Activated CD8-positive, alpha-beta T cell treated with anti-CD3 and anti-CD28 coated beads, Interleukin-2, amount 10 ng/mL, durations not matched to agents 7 days and 5 days (primary cell): ENCODE measurements at regions of chr15 and their contacts with region 1.

Region 1: DNA sequence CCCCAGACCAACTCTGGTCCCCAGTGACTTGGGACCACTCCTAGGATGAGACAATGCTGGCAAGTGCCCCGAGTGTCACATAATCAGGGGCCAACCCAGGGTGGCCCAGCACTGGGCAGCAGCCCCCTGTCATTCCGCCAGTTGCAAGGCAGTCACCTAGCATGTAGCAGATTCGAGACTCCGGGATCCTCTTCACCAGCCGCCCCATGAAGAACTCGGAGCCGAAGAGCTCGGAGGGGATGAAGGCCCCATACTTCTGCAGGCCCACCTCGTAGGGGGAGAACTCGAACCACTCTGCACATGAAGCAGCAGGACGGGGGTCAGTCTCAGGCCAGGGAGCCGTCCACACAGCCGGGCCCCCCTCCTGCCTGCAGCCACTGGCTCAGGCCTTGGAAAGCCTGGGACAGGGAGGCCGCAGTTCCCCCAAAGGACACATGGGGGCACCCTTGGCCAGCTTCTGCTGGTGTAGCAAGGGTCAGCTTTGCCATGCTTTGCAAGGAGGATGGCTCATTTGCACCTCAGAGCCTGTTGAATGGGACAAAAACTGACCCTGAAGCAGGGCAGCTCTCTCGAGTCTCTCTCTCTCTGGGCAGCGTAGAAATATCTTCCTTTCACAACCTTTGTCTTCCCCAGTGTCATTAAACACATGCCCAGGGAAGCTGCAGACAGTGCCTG is 17.0 kb upstream of the EHD4 start:
- DNase-seq: peak; percentile 88
- ATAC-seq: peak; percentile 88
- H3K4me3 Mint-ChIP-seq: no peak overlapping the region
- H3K27ac Mint-ChIP-seq: no peak overlapping the region
- H3K4me1 Mint-ChIP-seq: no peaks in the 10 kb centered on the region
- H3K27me3 Mint-ChIP-seq: no peaks in the 10 kb centered on the region

Region 2: DNA sequence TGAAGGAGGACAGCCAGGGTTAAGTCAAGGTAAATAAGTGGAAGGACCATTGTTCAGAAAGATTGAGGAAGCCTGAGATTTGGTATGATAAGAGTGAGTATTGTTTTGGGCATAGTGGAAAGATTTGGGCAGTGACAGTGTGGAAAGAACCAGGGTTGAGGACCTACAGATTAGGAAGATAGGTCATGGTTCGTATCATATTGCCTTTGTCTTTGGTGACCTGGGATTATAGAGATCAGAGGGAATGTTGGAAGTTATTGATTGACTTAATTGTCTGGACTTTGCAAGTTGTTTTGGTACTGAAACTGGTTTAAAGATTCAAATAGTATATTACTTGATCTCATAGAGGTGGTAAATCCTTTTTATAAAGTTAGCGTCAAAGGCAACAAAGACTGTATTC is 352.3 kb before region 1 on chr15:
- CTCF ChIA-PET with region 1: no interaction called
- POLR2A ChIA-PET with region 1: no interaction called
- DNase-seq: no peak
- ATAC-seq: no peak
- H3K4me3 Mint-ChIP-seq: no peak overlapping the region
- H3K27ac Mint-ChIP-seq: no peak overlapping the region
- H3K4me1 Mint-ChIP-seq: no peaks in the 10 kb centered on the region
- H3K27me3 Mint-ChIP-seq: no peaks in the 10 kb centered on the region

Region 3: DNA sequence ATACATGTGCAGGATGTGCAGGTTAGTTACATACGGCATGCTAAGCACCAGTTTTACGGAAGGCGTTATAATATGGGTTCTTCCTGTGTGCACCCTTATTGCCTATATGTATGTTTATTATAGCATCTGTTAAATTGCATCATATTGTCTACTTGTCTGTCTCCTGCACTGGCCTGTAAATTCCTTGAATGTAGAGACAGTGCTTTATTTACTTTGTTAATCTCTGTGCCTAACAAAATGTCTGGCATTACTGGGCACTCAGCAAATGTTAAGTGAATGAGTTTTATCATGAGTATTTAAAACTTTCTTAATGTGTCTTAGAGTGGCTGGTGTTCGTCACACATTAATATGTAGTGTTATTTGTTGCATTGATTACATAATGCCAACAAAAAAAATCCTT is 305.4 kb before region 1 on chr15:
- CTCF ChIA-PET with region 1: no interaction called
- POLR2A ChIA-PET with region 1: no interaction called
- DNase-seq: no peak
- ATAC-seq: no peak
- H3K4me3 Mint-ChIP-seq: no peak overlapping the region
- H3K27ac Mint-ChIP-seq: no peak overlapping the region
- H3K4me1 Mint-ChIP-seq: peaks cover 11% of the 10 kb centered on the region
- H3K27me3 Mint-ChIP-seq: no peaks in the 10 kb centered on the region

Region 4: DNA sequence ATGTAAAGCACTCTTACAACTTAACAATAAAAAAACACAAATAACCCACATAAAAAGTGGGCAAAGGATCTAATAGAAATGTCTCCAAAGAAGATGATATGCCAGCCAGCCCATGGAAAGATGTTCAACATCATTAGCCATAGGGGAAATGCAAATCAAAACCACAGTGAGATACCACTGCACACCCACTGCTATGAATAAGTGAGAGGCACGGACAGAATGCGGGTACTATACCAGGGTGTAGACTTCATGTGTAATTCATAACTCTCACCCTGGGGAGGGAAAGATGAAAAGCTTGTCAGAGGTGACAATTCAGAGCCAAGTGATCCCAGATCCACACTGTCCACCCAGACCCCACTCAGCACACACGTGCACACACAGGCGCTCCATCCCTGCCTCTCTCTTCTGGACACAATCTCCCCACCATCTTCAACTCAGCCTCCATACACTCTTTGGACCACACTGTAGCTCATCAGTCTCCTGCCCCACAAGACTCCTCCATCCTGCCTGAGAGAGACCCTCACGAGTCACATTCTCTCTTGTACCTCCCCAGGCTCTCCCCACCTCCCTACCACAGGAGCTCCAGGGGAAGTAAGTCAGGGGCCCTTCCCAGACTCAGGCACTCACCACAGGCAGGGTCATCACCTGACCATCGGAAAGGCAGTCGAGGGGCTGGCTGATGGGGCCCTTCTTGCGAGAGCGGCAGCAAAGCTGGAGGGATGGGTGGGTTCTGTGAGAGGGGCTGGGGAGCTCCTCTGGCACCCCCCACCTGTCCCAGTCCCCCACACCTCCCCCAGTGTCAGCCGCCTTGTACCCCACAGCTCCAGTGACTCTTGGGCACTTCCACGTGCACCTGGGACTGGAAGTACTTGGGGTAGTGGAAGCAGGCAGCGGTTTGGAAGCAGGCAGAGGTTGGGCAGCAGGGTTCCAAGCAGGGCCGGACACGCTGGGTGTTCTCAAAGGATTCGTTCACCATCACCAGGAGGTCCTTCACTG is 10.2 kb after region 1 on chr15:
- CTCF ChIA-PET with region 1: interaction called, 11 read pairs
- POLR2A ChIA-PET with region 1: no interaction called
- DNase-seq: no peak
- ATAC-seq: no peak
- H3K4me3 Mint-ChIP-seq: no peak overlapping the region
- H3K27ac Mint-ChIP-seq: no peak overlapping the region
- H3K4me1 Mint-ChIP-seq: no peaks in the 10 kb centered on the region
- H3K27me3 Mint-ChIP-seq: no peaks in the 10 kb centered on the region

Region 5: GRCh38 chr15:42007386-42007785 is 18.0 kb after region 1 on chr15:
- CTCF ChIA-PET with region 1: interaction called, 11 read pairs
- POLR2A ChIA-PET with region 1: no interaction called
- DNase-seq: no peak
- ATAC-seq: no peak
- H3K4me3 Mint-ChIP-seq: no peak overlapping the region
- H3K27ac Mint-ChIP-seq: no peak overlapping the region
- H3K4me1 Mint-ChIP-seq: peaks cover 11% of the 10 kb centered on the region
- H3K27me3 Mint-ChIP-seq: peaks cover 2% of the 10 kb centered on the region

Region 6: DNA sequence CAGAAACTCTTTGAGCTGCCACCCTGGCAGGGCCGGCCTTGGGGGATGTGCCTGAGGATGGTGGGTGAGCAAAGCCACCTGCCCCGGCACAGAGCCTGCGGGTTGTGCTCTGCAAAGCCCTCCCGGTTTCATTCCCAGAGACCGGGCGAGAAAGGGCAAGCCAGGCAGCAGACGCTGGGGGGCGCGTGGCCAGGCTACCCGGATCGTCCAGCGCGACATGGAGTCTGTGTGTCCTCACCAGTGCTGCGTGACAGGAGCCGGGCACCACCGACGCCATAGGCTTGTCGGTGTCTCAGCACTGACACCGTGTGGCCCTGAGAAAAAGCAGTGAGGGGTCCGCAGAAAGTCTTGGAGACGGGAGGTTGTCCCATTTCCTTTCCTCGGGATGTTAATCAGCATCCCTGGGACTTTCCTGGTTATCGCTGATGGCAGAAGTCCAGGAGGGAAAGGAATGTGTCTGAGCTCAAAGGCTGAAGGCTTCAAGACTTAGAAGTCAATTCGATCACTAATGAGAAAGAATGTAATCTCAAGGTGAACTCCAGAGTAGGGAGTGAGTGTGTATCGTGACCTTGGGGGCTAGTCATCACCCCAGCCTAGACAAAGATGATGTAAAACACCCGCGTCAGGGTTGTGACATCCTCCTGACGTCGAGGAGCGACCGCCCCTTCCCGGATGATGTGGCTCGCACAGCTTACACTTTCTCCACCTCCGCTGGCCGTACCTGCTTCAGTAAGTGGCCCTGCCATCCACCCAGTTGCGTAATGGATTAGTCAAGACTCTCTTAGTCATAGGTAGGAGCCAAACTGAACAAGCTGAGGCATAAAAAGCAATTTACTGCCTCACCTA is 67.8 kb after region 1 on chr15:
- CTCF ChIA-PET with region 1: interaction called, 64 read pairs
- POLR2A ChIA-PET with region 1: no interaction called
- DNase-seq: peak; percentile 59
- ATAC-seq: peak; percentile 80
- H3K4me3 Mint-ChIP-seq: peak overlapping the region; percentile 46
- H3K27ac Mint-ChIP-seq: no peak overlapping the region
- H3K4me1 Mint-ChIP-seq: peaks cover 14% of the 10 kb centered on the region
- H3K27me3 Mint-ChIP-seq: peaks cover 33% of the 10 kb centered on the region

Region 7: DNA sequence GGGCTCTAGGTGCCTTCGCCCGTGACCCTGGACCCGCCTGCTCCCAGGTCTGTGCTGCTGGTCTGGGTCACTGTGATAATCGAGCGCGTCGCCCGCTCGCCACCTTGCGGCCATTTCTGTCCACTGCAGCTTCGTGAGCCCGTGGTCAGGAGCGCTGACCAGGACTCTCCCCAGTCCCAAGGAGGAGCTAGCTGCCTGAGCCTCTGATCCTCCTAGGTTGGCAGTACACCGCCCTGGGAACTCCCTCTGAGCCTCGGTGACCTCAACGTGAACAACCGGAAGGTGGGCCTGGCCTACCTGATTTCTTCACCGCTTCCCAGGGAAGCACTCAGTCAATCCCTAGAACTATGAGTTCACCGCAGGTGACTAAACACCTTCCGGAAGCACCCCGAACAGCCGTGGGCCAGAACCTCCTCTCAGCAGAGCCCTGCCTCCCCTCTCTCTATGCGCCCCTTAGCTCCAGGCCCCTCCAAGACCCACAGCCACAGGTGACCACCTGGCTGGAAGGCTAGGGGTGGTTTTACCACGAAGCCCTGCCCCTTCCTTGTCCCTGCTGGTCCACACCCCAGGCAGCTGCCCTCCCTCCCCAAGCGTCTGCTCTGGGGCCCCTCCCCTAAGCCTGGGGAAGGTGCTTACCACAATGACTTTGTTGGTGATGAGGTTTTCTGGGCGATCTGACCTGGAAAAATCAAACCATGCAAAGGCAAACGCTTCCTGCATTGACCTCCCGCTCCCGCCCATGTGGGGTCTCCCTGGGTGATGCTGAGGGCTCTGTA is 95.3 kb after region 1 on chr15:
- CTCF ChIA-PET with region 1: interaction called, 20 read pairs
- POLR2A ChIA-PET with region 1: no interaction called
- DNase-seq: peak; percentile 54
- ATAC-seq: peak; percentile 76
- H3K4me3 Mint-ChIP-seq: no peak overlapping the region
- H3K27ac Mint-ChIP-seq: no peak overlapping the region
- H3K4me1 Mint-ChIP-seq: peaks cover 12% of the 10 kb centered on the region
- H3K27me3 Mint-ChIP-seq: no peaks in the 10 kb centered on the region

Region 8: GRCh38 chr15:42137431-42138261 is 148.2 kb after region 1 on chr15:
- CTCF ChIA-PET with region 1: interaction called, 24 read pairs
- POLR2A ChIA-PET with region 1: no interaction called
- DNase-seq: peak; percentile 50
- ATAC-seq: peak; percentile 34
- H3K4me3 Mint-ChIP-seq: no peak overlapping the region
- H3K27ac Mint-ChIP-seq: no peak overlapping the region
- H3K4me1 Mint-ChIP-seq: no peaks in the 10 kb centered on the region
- H3K27me3 Mint-ChIP-seq: peaks cover 2% of the 10 kb centered on the region